Heart left ventricle (tissue), 16 donors: ENCODE measurements at regions of chr2 and their contacts with region 1.

Region 1: GRCh38 chr2:224561234-224562005 is 23.7 kb downstream of the CUL3 start:
- DNase-seq: no peak
- ATAC-seq: no peak
- H3K4me3 ChIP-seq: no peak overlapping the region
- H3K27ac ChIP-seq: no peak overlapping the region
- H3K4me1 ChIP-seq: peaks cover 0 to 58% (median 28%) of the 10 kb centered on the region in 12 donors
- H3K27me3 ChIP-seq: no peaks in the 10 kb centered on the region
- CTCF ChIP-seq: no peak
- POLR2A ChIP-seq: no peak

Region 2: DNA sequence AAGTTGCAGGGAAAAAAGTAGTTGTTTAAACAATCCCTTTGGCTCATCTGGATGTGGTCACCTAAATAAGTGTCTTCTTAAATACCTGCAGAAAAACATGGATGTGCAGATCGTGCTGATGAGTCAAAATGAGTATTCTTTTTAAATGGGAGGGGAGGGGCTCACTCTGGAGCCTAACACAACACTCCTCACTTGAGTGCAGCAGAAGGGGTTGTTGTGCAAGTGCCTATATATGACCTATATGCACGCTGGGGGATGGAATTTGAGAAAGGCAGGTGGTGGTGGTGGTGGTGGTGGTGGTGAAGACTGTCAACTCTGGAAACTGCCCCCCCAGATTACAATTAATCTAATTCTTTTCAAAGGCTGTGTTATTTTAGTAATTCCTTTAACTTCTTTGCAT is 81.6 kb before region 1 on chr2:
- intact Hi-C with region 1: loop called in 1 of 10 experiments (anchors 10 kb)
- DNase-seq: no peak
- ATAC-seq: no peak
- H3K4me3 ChIP-seq: no peak overlapping the region
- H3K27ac ChIP-seq: no peak overlapping the region
- H3K4me1 ChIP-seq: no peaks in the 10 kb centered on the region
- H3K27me3 ChIP-seq: no peaks in the 10 kb centered on the region
- CTCF ChIP-seq: no peak
- POLR2A ChIP-seq: no peak

Region 3: GRCh38 chr2:224545884-224546644 is 15.4 kb before region 1 on chr2:
- intact Hi-C with region 1: loop called in 1 of 10 experiments (anchors 2 kb)
- DNase-seq: no peak
- ATAC-seq: no peak
- H3K4me3 ChIP-seq: no peak overlapping the region
- H3K27ac ChIP-seq: no peak overlapping the region
- H3K4me1 ChIP-seq: peaks cover 0 to 39% (median 22%) of the 10 kb centered on the region in 12 donors
- H3K27me3 ChIP-seq: no peaks in the 10 kb centered on the region
- CTCF ChIP-seq: no peak
- POLR2A ChIP-seq: no peak